Mammary epithelial cell (primary cell): ENCODE measurements at regions of chr10 and their contacts with region 1.

Region 1: DNA sequence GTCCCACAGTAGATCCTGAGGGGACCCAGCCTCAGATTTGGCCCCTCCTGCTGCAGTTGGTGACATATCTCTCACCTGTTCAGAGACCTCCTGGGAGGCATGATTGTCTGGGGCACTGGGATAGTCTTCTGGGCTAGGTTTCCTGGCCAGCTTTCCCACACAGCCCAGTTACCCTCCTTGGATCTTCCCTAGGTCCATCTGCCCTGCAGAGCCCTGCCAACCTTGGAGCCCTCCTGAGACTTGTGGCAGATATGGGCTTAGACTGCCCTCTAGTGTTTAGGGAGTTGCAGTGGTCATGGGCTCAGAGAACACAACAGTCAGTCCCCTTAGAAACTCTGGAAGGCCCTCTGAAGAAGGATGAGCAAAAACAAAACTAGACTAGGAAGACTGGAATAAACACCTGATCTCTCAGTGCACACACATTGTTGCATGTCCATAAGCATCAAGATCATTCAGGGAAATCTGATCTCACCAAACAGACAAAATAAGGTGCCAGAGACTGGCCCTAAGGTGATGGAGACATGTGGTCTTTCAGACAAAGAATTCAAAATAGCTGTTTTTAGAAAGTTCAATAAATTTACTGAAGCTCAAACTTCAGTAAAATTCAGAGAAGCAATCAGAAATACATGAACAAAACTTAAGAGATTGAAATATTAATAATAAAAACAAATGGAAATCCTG is 324.6 kb downstream of the ATRNL1 start:
- DNase-seq: peak; percentile 45
- H3K4me3 ChIP-seq: no peak overlapping the region
- H3K27ac ChIP-seq: no peak overlapping the region
- H3K4me1 ChIP-seq: no peaks in the 10 kb centered on the region
- H3K27me3 ChIP-seq: no peaks in the 10 kb centered on the region
- CTCF ChIP-seq: peak; percentile 81 to 90

Region 2: GRCh38 chr10:115141254-115141653 is 276.5 kb before region 1 on chr10:
- CTCF ChIA-PET with region 1: no interaction called
- dilution Hi-C with region 1: no loop called
- in situ Hi-C with region 1: no loop called
- intact Hi-C with region 1: loop called (anchors 1 kb)
- DNase-seq: no peak
- H3K4me3 ChIP-seq: no peak overlapping the region
- H3K27ac ChIP-seq: no peak overlapping the region
- H3K4me1 ChIP-seq: no peaks in the 10 kb centered on the region
- H3K27me3 ChIP-seq: peaks cover under 1% of the 10 kb centered on the region
- CTCF ChIP-seq: peak; percentile 32 to 48

Region 3: DNA sequence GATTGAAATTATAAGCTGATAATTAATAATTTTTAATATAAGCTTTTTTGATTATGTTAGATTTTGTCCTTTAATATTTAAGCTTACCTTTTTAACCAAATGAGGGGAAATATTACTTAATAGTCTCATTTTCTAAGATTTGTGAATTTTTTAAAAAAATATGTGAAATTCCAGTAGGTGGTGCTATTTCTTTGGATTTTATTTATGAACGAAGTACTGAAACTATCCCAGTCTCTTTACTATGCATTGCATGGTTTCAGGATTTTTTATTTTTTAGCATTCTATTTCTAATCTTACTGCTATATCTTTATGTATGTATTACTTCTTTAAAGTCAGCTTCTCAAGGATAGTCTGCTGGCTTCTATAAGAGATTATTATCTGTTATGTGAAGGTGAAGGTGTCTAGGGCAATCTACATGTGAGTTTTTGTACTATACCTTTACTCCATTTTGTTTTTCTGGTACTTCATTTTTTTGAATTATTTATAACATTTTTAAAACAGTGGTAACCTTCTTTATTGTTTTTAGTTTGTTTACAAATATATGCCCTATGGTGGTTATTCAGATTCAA is 246.2 kb before region 1 on chr10:
- CTCF ChIA-PET with region 1: no interaction called
- dilution Hi-C with region 1: no loop called
- in situ Hi-C with region 1: no loop called
- intact Hi-C with region 1: loop called (anchors 2 kb)
- DNase-seq: no peak
- H3K4me3 ChIP-seq: no peak overlapping the region
- H3K27ac ChIP-seq: no peak overlapping the region
- H3K4me1 ChIP-seq: no peaks in the 10 kb centered on the region
- H3K27me3 ChIP-seq: peaks cover 2% of the 10 kb centered on the region
- CTCF ChIP-seq: peak; percentile 38 to 44

Region 4: DNA sequence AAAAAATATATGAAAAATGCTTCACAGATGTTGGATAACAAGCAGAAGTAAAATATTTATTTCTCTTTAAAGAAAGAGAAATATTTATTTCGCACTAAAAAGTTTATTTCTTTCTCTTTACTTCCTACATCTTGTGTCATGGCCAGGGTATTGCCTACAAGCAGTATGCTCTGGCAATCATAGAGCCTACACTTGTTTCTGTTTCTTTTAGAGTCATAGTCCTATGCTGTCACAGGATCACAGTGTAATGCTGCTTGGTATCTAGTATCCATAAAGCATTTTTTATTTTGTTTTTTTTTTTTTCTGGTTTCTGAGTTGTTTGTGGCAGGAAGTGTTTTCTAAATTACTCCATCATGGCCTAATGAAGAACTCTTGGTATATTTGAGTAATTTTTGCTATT is 208.6 kb before region 1 on chr10:
- CTCF ChIA-PET with region 1: no interaction called
- dilution Hi-C with region 1: no loop called
- in situ Hi-C with region 1: no loop called
- intact Hi-C with region 1: no loop called
- DNase-seq: no peak
- H3K4me3 ChIP-seq: no peak overlapping the region
- H3K27ac ChIP-seq: no peak overlapping the region
- H3K4me1 ChIP-seq: no peaks in the 10 kb centered on the region
- H3K27me3 ChIP-seq: peaks cover 1% of the 10 kb centered on the region
- CTCF ChIP-seq: no peak

Region 5: GRCh38 chr10:115456822-115457221 is 39.1 kb after region 1 on chr10:
- CTCF ChIA-PET with region 1: no interaction called
- dilution Hi-C with region 1: no loop called
- in situ Hi-C with region 1: no loop called
- intact Hi-C with region 1: no loop called
- DNase-seq: no peak
- H3K4me3 ChIP-seq: no peak overlapping the region
- H3K27ac ChIP-seq: no peak overlapping the region
- H3K4me1 ChIP-seq: no peaks in the 10 kb centered on the region
- H3K27me3 ChIP-seq: no peaks in the 10 kb centered on the region
- CTCF ChIP-seq: no peak